ENCODE measurements at regions of chr20 and their contacts with region 1.

Region 1: GRCh38 chr20:9609887-9610502 is 95.6 kb downstream of the LAMP5 start:
- DNase-seq: peak; percentile 32
- H3K4me3 ChIP-seq: no peak overlapping the region; a peak in 1 of 4 replicates
- H3K27ac ChIP-seq: peak overlapping the region in 1 of 2 experiments; percentile 51; a peak in 1 of 4 replicates
- H3K4me1 ChIP-seq: peaks cover 0 to 14% of the 10 kb centered on the region in 2 experiments; a peak in 3 of 4 replicates
- H3K27me3 ChIP-seq: no peaks in the 10 kb centered on the region
- CTCF ChIP-seq: peak; percentile 83
- EP300 ChIP-seq: no peak
- RAD21 ChIP-seq: peak; percentile 93

Region 2: GRCh38 chr20:9424551-9424950 is 185.4 kb before region 1 on chr20:
- CTCF ChIA-PET with region 1: interaction called, 38 read pairs
- POLR2A ChIA-PET with region 1: interaction called, 3 read pairs
- DNase-seq: no peak
- H3K4me3 ChIP-seq: no peak overlapping the region
- H3K27ac ChIP-seq: no peak overlapping the region
- H3K4me1 ChIP-seq: peaks cover 4 to 10% of the 10 kb centered on the region in 2 experiments; a peak in 2 of 4 replicates
- H3K27me3 ChIP-seq: no peaks in the 10 kb centered on the region
- CTCF ChIP-seq: no peak
- EP300 ChIP-seq: no peak
- RAD21 ChIP-seq: no peak

Region 3: DNA sequence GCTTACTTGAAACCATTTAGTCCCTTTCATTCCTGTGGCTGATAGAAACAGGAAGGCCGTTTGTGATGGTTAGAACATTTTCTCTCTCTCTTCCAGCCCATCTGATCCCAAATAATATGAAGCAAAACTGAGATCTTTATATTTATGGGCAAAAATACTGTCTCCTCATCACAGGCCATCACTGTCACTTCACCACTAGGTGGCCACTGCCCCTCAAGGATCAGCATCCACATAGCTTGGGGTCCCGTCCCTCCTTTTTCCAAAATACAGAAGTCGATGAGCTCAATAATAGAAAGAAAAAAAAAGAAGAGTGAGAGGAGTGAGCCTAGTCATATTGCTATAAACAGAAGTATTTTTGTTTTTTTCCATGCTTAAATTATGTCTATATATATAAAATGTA is 142.0 kb before region 1 on chr20:
- CTCF ChIA-PET with region 1: interaction called, 29 read pairs
- POLR2A ChIA-PET with region 1: no interaction called
- DNase-seq: peak; percentile 44
- H3K4me3 ChIP-seq: no peak overlapping the region
- H3K27ac ChIP-seq: no peak overlapping the region
- H3K4me1 ChIP-seq: peaks cover 0 to 9% of the 10 kb centered on the region in 2 experiments; a peak in 2 of 4 replicates
- H3K27me3 ChIP-seq: no peaks in the 10 kb centered on the region
- CTCF ChIP-seq: peak; percentile 76
- EP300 ChIP-seq: no peak
- RAD21 ChIP-seq: peak; percentile 82

Region 4: GRCh38 chr20:9514461-9515213 is 95.4 kb before region 1 on chr20 and contains the start of gene LAMP5:
- CTCF ChIA-PET with region 1: interaction called, 27 read pairs
- POLR2A ChIA-PET with region 1: interaction called, 6 read pairs
- DNase-seq: peak; percentile 82
- H3K4me3 ChIP-seq: peak within 1 kb of the TSS; percentile 54 to 66
- H3K27ac ChIP-seq: peak within 1 kb of the TSS in 1 of 2 experiments; percentile 58; a peak in 2 of 4 replicates
- H3K4me1 ChIP-seq: peaks cover 0 to 19% of the 10 kb centered on the region in 2 experiments; a peak in 3 of 4 replicates
- H3K27me3 ChIP-seq: peaks cover 11% of the 10 kb centered on the region; the same call in 1 of the 2 replicates
- CTCF ChIP-seq: no peak
- EP300 ChIP-seq: no peak
- RAD21 ChIP-seq: no peak
- polyA plus RNA-seq, gene LAMP5: 4.8 and 10.1 TPM in 2 replicates

Region 5: DNA sequence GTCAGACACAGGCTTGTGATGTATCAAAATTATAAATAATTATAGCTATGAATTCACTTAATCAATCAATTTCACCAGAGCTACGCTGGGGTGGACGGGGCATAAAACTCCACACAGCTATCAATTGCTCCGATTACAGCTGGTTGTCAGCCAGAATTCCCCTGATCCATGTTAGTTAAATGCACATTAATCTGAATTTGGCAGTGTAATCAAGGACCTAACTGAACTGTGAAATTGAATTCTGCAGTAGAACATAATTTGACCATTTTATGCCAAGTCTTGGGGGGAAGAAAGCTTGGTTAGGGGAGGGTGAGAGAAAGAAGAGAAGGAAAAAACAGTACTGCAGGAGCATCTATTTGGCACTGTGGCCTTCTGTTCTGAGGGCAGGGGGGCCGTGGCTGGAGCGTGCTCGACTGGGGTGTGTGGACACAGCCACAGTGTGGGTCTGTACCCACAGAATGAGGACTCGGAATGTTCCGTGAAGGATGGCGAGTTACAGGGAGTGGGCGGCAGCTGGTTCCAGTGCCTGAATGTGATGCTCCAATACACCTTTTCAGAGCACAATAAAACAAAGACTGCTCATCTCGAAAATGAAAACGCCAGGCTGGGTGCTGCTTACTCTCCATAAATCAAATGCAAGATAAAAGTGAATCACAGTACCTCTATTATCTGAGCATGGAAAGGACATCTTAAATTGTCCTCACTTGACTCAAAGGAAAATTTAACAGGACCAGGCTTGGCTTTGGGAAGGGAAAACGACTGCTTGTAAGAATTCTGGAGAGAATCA is 36.5 kb before region 1 on chr20:
- CTCF ChIA-PET with region 1: interaction called, 36 read pairs
- POLR2A ChIA-PET with region 1: no interaction called
- DNase-seq: peak; percentile 26
- H3K4me3 ChIP-seq: no peak overlapping the region
- H3K27ac ChIP-seq: no peak overlapping the region; a peak in 1 of 4 replicates
- H3K4me1 ChIP-seq: peaks cover 0 to 31% of the 10 kb centered on the region in 2 experiments; a peak in 2 of 4 replicates
- H3K27me3 ChIP-seq: no peaks in the 10 kb centered on the region
- CTCF ChIP-seq: no peak
- EP300 ChIP-seq: no peak
- RAD21 ChIP-seq: no peak

Region 6: GRCh38 chr20:9699181-9699580 is 89.2 kb after region 1 on chr20:
- CTCF ChIA-PET with region 1: no interaction called
- POLR2A ChIA-PET with region 1: no interaction called
- DNase-seq: no peak
- H3K4me3 ChIP-seq: no peak overlapping the region
- H3K27ac ChIP-seq: no peak overlapping the region
- H3K4me1 ChIP-seq: no peaks in the 10 kb centered on the region
- H3K27me3 ChIP-seq: no peaks in the 10 kb centered on the region
- CTCF ChIP-seq: no peak
- EP300 ChIP-seq: no peak
- RAD21 ChIP-seq: no peak

Region 7: GRCh38 chr20:9775176-9775575 is 165.2 kb after region 1 on chr20:
- CTCF ChIA-PET with region 1: no interaction called
- POLR2A ChIA-PET with region 1: no interaction called
- DNase-seq: no peak
- H3K4me3 ChIP-seq: no peak overlapping the region
- H3K27ac ChIP-seq: no peak overlapping the region
- H3K4me1 ChIP-seq: no peaks in the 10 kb centered on the region
- H3K27me3 ChIP-seq: no peaks in the 10 kb centered on the region
- CTCF ChIP-seq: no peak
- EP300 ChIP-seq: no peak
- RAD21 ChIP-seq: no peak